Activated naive CD4-positive, alpha-beta T cell treated with anti-CD3 and anti-CD28 coated beads for 36 hours (primary cell): ENCODE measurements at regions of chr4 and their contacts with region 1.

Region 1: DNA sequence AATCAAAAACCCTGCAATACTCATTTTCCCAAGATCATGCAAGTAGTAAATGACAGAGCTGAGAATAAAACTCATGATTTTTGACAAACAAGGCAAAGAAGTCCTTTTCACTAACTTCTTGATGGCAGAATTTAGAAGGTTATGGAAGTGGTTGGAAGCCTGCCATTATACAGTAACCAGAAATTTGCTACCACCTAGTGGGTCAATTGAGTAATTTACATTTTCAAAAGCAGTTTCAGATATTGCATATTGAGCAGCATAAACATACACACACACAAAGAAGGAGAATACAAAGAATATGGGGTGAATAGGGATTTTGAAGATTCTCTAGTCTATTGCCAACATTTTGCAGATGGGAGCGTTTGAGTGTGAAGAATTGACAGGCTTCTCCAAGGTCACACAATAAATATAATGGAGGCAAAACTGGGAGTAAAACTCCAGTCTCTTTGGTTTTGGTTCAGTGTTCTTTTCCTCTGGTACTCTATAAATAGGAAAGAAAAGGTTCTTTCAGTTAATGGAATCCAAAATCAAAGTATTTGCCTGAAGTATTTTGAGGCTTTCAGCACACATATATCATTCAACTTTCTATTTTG is 70.2 kb downstream of the GC start:
- DNase-seq: no peak
- H3K4me3 Mint-ChIP-seq: no peak overlapping the region
- H3K27ac Mint-ChIP-seq: no peak overlapping the region
- H3K4me1 Mint-ChIP-seq: no peaks in the 10 kb centered on the region
- H3K27me3 Mint-ChIP-seq: no peaks in the 10 kb centered on the region

Region 2: DNA sequence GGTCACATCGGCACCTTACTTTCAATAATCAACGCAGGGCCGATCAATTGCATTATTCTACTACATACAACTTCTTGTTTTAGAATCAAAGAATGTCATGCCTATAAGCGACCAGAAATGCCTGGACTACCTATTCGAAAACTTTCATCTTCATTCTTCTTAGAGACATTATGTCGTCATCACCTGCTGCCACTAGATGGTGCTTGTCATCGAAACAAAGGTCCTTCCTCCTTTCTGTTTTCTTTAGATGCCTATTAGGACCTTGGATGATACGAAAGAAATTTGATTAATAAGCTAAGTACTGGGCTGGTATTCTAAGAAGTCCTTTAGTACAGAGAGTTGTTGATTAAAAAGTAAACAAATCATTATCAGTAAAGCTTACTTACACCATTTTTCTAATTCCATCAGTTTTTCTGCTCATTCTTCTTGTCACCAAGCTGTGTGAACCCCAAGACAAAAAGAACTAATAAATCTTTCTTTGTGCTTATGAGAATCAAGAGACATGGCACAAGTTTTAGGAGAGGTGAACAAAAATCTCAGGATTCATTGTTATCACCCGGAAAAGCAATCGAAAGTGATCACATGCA is 529.4 kb before region 1 on chr4:
- CTCF ChIA-PET with region 1: interaction called, 3 read pairs
- intact Hi-C with region 1: loop called (anchors 1 kb)
- DNase-seq: peak; percentile 69
- H3K4me3 Mint-ChIP-seq: no peak overlapping the region
- H3K27ac Mint-ChIP-seq: no peak overlapping the region
- H3K4me1 Mint-ChIP-seq: peaks cover 18% of the 10 kb centered on the region
- H3K27me3 Mint-ChIP-seq: peaks cover 35% of the 10 kb centered on the region

Region 3: GRCh38 chr4:71229477-71230270 is 484.0 kb before region 1 on chr4:
- CTCF ChIA-PET with region 1: no interaction called
- intact Hi-C with region 1: loop called (anchors 1 kb)
- DNase-seq: peak; percentile 10
- H3K4me3 Mint-ChIP-seq: no peak overlapping the region
- H3K27ac Mint-ChIP-seq: no peak overlapping the region
- H3K4me1 Mint-ChIP-seq: no peaks in the 10 kb centered on the region
- H3K27me3 Mint-ChIP-seq: peaks cover 7% of the 10 kb centered on the region

Region 4: GRCh38 chr4:71270901-71271300 is 442.8 kb before region 1 on chr4:
- CTCF ChIA-PET with region 1: interaction called, 3 read pairs
- intact Hi-C with region 1: loop called (anchors 1 kb)
- DNase-seq: peak; percentile 55
- H3K4me3 Mint-ChIP-seq: no peak overlapping the region
- H3K27ac Mint-ChIP-seq: no peak overlapping the region
- H3K4me1 Mint-ChIP-seq: peaks cover 10% of the 10 kb centered on the region
- H3K27me3 Mint-ChIP-seq: peaks cover 4% of the 10 kb centered on the region

Region 5: DNA sequence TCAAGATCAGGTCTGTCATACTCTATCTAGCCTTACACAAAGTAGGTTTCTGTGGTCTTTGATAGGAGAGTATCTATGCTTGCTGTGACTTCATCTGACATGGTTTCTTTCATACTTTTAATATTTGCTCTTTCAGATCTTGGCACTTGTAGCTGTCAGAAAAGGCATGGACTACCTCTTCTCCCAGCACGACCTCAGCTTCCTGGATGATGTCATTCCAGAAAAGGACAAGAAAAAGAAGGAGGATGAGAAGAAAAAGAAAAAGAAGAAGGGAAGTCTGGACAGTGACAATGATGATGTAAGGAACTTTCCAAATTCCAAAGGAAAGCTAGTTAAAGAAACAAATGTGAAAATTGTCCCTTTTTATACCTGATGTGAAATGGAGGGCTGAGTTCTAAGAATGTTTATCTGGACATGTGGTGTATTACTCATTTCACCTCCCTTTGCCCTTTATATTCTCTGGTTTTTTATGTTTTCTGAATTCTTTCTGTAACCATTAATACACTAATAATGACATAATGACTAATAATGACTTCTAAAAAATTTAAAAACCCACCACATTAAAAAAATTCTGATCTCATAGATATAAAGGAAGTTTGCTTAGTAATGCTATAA is 153.6 kb before region 1 on chr4:
- CTCF ChIA-PET with region 1: no interaction called
- intact Hi-C with region 1: loop called (anchors 10 kb)
- DNase-seq: no peak
- H3K4me3 Mint-ChIP-seq: no peak overlapping the region
- H3K27ac Mint-ChIP-seq: no peak overlapping the region
- H3K4me1 Mint-ChIP-seq: peaks cover 3% of the 10 kb centered on the region
- H3K27me3 Mint-ChIP-seq: peaks cover 4% of the 10 kb centered on the region

Region 6: GRCh38 chr4:71616153-71616811 is 97.4 kb before region 1 on chr4:
- CTCF ChIA-PET with region 1: no interaction called
- intact Hi-C with region 1: no loop called
- DNase-seq: no peak
- H3K4me3 Mint-ChIP-seq: no peak overlapping the region
- H3K27ac Mint-ChIP-seq: no peak overlapping the region
- H3K4me1 Mint-ChIP-seq: no peaks in the 10 kb centered on the region
- H3K27me3 Mint-ChIP-seq: no peaks in the 10 kb centered on the region

Region 7: GRCh38 chr4:71857713-71858451 is 144.2 kb after region 1 on chr4:
- CTCF ChIA-PET with region 1: no interaction called
- intact Hi-C with region 1: no loop called
- DNase-seq: no peak
- H3K4me3 Mint-ChIP-seq: no peak overlapping the region
- H3K27ac Mint-ChIP-seq: no peak overlapping the region
- H3K4me1 Mint-ChIP-seq: no peaks in the 10 kb centered on the region
- H3K27me3 Mint-ChIP-seq: no peaks in the 10 kb centered on the region